H1 (cell line): ENCODE measurements at regions of chr10 and their contacts with region 1.

Region 1: GRCh38 chr10:132654702-132655661 is 117.4 kb downstream of the INPP5A start:
- DNase-seq: peak; percentile 39 to 92
- H3K4me3 ChIP-seq: no peak overlapping the region
- H3K27ac ChIP-seq: no peak overlapping the region
- H3K4me1 ChIP-seq: no peaks in the 10 kb centered on the region; a peak in 1 of 7 replicates
- H3K27me3 ChIP-seq: no peaks in the 10 kb centered on the region
- CTCF ChIP-seq: peak in 2 of 3 experiments; percentile 90 to 93; a peak in 3 of 4 replicates
- EP300 ChIP-seq: no peak
- POLR2A ChIP-seq: no peak
- RAD21 ChIP-seq: peak; percentile 95 to 97

Region 2: DNA sequence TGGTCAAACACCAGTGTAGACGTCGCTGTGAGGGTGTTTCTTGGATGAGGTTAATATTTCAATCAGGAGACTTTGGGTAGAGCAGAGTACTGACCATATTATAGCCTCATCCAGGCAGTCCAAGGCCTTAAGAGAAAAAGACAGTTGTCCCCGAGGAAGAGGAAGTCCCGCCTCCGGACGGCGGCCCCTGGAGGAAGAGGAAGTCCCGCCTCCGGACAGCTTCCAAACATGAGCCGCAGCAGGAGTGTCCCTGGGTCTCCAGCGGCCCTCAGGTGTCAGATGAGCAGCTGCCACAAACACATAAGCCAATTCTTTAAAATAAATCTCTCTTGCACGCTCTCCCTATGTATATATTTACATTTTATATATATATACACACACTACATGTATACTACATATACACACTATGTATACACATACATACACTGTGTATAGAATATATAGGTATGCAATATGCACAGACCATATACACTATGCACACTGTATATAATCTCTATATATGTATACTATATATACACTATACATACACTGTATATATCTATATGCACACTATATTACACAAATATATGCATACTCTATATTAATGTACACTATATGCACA is 220.5 kb before region 1 on chr10:
- CTCF ChIA-PET with region 1: no interaction called
- POLR2A ChIA-PET with region 1: no interaction called
- DNase-seq: no peak
- H3K4me3 ChIP-seq: no peak overlapping the region
- H3K27ac ChIP-seq: no peak overlapping the region
- H3K4me1 ChIP-seq: peaks cover 0 to 11% (median 1%) of the 10 kb centered on the region in 4 experiments; a peak in 4 of 7 replicates
- H3K27me3 ChIP-seq: no peaks in the 10 kb centered on the region
- CTCF ChIP-seq: no peak
- EP300 ChIP-seq: no peak
- POLR2A ChIP-seq: no peak
- RAD21 ChIP-seq: no peak

Region 3: DNA sequence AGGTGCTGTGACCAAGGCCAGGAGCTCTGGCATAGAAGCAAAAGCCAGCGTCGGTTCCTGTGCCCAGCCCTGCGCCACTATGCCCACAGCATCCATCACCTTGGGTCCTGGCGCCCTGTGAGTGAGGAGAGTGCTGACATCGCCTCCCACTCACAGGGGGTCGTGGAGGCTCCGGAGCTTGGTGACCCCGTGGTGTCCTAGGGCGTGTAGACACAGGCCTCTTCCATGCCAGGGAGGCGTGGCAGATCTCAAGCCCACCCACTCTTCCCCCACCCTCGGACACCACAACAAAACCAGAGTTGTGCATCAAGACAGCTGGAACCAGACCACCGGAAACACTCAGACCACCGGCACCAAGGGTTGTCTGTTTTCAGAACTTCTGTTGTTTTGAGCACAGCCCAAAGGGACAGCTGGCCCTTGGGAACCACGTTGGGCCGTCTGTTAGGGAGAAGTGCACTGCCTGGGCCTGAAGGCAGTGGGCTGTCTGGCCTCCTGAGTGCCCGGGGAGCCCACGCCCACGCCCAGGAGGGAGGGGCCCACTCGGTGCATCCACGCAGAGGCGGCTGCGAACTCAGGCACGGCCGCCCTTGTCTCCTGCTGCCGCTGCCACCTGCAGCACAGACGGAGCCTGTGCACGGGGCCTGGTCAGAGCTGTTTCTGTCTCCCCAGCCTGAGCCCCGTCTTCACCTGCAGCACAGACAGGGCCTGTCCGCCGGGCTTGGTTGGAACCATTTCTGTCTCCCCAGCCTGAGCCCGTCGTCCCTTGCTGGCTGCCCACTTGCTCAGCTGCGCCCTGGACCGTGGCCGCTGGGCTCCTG is 11.1 kb before region 1 on chr10:
- CTCF ChIA-PET with region 1: interaction called, 37 read pairs
- POLR2A ChIA-PET with region 1: no interaction called
- DNase-seq: no peak
- H3K4me3 ChIP-seq: no peak overlapping the region
- H3K27ac ChIP-seq: no peak overlapping the region
- H3K4me1 ChIP-seq: no peaks in the 10 kb centered on the region
- H3K27me3 ChIP-seq: peaks cover 0 to 2% (median 0%) of the 10 kb centered on the region in 4 experiments; a peak in 1 of 7 replicates
- CTCF ChIP-seq: peak in 2 of 3 experiments; percentile 17 to 29; a peak in 1 of 4 replicates
- EP300 ChIP-seq: no peak
- POLR2A ChIP-seq: no peak
- RAD21 ChIP-seq: peak in 1 of 2 experiments; percentile 26; a peak in 2 of 4 replicates

Region 4: DNA sequence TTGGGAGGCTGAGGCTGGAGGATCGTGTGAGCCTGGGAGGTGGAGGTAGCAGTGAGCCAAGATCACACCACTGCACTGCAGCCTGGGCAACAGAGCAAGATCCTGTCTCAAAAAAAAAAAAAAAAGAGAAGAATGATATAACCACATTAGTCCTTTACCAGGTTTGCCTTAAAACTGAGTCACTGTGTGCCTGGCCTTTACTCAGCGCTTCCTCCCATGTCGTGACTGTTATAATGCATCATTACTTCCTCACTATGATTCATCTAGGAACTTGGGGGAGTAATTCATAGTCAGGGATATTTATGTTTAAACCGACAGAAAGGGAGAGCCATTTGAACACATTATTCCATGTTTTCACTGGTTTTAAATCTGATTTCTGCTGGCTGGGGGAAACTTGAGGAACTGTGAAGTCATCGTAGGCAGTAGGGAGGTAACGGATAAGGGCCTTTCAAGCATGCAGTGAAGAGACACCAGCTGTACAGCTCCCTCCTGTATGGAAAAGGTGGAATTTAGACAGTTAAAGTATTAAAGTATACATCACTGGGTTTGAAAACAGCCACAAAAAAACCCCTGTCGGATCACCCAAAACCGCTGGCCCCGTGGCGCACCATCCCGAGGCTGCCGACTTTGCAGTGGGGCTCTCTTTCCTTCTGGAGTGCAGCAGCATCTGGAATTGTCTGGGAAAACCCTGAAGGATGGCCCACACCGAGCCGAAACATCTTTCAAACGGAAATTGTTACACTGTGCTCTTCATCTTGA is 11.1 kb after region 1 on chr10:
- CTCF ChIA-PET with region 1: interaction called, 13 read pairs
- POLR2A ChIA-PET with region 1: interaction called, 3 read pairs
- DNase-seq: no peak
- H3K4me3 ChIP-seq: no peak overlapping the region
- H3K27ac ChIP-seq: no peak overlapping the region
- H3K4me1 ChIP-seq: no peaks in the 10 kb centered on the region; a peak in 1 of 7 replicates
- H3K27me3 ChIP-seq: no peaks in the 10 kb centered on the region
- CTCF ChIP-seq: no peak
- EP300 ChIP-seq: no peak
- POLR2A ChIP-seq: no peak
- RAD21 ChIP-seq: no peak

Region 5: DNA sequence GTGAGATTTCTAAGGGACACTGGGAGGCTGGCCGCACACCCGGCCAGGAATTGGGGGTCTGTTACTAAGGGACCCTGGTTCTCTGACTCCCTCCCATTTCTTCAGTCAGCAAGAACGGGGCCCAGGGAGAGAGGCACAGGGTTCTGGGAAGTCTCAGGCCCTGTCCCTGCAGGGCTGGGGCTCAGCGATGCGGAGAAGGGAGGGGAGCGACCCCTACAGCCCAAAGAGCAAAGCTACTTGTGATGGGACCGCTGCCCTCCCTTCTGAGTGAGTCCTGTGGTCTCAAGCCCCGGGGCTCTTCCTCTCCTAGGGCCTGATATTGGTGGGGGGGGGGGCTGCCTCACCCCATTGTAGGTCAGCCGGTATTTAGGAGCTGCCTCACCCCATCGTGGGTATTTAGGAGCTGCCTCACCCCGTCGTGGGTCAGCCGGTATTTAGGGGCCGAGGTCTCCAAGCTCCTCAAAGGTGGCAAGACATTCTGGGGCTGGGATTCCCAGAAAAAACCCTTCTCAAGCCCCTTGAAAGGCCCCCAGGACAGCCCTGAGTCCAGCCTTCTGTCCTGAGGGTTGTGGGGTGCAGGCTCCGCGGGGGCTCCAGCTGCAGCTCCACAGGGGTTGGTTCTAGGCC is 147.8 kb after region 1 on chr10:
- CTCF ChIA-PET with region 1: interaction called, 10 read pairs
- POLR2A ChIA-PET with region 1: no interaction called
- DNase-seq: no peak
- H3K4me3 ChIP-seq: no peak overlapping the region
- H3K27ac ChIP-seq: no peak overlapping the region
- H3K4me1 ChIP-seq: no peaks in the 10 kb centered on the region
- H3K27me3 ChIP-seq: no peaks in the 10 kb centered on the region
- CTCF ChIP-seq: peak; percentile 38 to 61 (median 60); a peak in 3 of 4 replicates
- EP300 ChIP-seq: no peak
- POLR2A ChIP-seq: no peak
- RAD21 ChIP-seq: peak; percentile 66 to 68

Region 6: GRCh38 chr10:132862485-132863420 is 207.8 kb after region 1 on chr10:
- CTCF ChIA-PET with region 1: interaction called, 17 read pairs
- POLR2A ChIA-PET with region 1: no interaction called
- DNase-seq: peak in 1 of 2 experiments; percentile 50
- H3K4me3 ChIP-seq: no peak overlapping the region
- H3K27ac ChIP-seq: no peak overlapping the region
- H3K4me1 ChIP-seq: peaks cover 0 to 6% (median 3%) of the 10 kb centered on the region in 4 experiments; a peak in 5 of 7 replicates
- H3K27me3 ChIP-seq: no peaks in the 10 kb centered on the region
- CTCF ChIP-seq: no peak
- EP300 ChIP-seq: no peak
- POLR2A ChIP-seq: no peak
- RAD21 ChIP-seq: no peak